ENCODE measurements at regions of chr3 and their contacts with region 1.

Region 1: GRCh38 chr3:46297658-46298463 is 55.6 kb downstream of the CCR3 start:
- DNase-seq: no peak
- ATAC-seq: no peak
- H3K4me3 Mint-ChIP-seq: no peak overlapping the region
- H3K27ac Mint-ChIP-seq: peak overlapping the region; percentile 87
- H3K4me1 Mint-ChIP-seq: peaks cover 87% of the 10 kb centered on the region
- H3K27me3 Mint-ChIP-seq: peaks cover 4% of the 10 kb centered on the region
- CTCF ChIP-seq: no peak

Region 2: GRCh38 chr3:46284981-46285683 is 12.7 kb before region 1 on chr3:
- CTCF ChIA-PET with region 1: interaction called, 6 read pairs
- POLR2A ChIA-PET with region 1: interaction called, 11 read pairs
- intact Hi-C with region 1: loop called (anchors 2 kb)
- DNase-seq: peak; percentile 73
- ATAC-seq: peak; percentile 43
- H3K4me3 Mint-ChIP-seq: no peak overlapping the region
- H3K27ac Mint-ChIP-seq: peak overlapping the region; percentile 82
- H3K4me1 Mint-ChIP-seq: peaks cover 69% of the 10 kb centered on the region
- H3K27me3 Mint-ChIP-seq: peaks cover 1% of the 10 kb centered on the region
- CTCF ChIP-seq: no peak

Measured in activated CD8-positive, alpha-beta T cell treated with anti-CD3 and anti-CD28 coated beads for 36 hours (primary cell).